SK-N-SH (cell line): ENCODE measurements at regions of chr19 and their contacts with region 1.

Region 1: DNA sequence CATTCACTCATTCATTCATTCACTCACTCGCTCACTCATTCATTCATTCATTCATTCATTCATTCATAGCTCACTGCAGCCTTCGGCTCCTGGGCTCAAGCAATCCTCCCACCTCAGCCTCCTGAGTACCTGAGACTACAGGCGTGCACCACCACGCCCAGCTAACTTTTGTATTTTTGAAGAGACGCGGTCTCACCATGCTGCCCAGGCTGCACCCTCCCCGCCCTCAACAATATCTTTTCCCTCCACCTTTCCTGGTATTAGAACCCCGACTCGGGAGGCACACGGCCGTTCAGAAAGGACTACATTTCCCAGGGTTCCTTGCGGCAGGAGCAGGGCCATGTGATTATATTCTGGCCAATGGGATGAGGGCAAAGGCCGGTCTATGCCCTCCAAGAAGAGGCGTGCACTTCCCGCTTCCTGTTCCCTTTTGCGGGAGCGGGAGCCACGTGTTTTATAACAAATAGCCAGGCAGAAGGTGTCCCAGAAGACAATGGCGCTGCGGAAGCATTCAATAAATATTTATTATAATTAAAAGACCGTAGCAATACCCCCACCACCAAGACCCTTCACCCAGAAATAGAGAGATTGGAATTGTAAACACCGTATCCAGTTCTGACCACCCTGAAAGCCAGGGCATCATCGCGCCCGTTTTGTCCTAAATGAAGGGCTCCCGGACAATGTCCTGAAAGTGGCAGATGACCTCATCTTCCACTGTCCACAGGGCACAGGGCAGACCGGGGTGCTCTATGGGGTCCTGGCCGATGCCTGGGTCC is 15.9 kb downstream of the TICAM1 start:
- DNase-seq: peak; percentile 97
- H3K4me3 ChIP-seq: peak overlapping the region in 1 of 2 experiments; percentile 27; a peak in 1 of 4 replicates
- H3K27ac ChIP-seq: peak overlapping the region; percentile 48 to 56; a peak in 3 of 4 replicates
- H3K4me1 ChIP-seq: peaks cover 3 to 7% of the 10 kb centered on the region in 2 experiments; a peak in 2 of 4 replicates
- H3K27me3 ChIP-seq: no peaks in the 10 kb centered on the region
- CTCF ChIP-seq: no peak
- EP300 ChIP-seq: no peak
- RAD21 ChIP-seq: no peak

Region 2: DNA sequence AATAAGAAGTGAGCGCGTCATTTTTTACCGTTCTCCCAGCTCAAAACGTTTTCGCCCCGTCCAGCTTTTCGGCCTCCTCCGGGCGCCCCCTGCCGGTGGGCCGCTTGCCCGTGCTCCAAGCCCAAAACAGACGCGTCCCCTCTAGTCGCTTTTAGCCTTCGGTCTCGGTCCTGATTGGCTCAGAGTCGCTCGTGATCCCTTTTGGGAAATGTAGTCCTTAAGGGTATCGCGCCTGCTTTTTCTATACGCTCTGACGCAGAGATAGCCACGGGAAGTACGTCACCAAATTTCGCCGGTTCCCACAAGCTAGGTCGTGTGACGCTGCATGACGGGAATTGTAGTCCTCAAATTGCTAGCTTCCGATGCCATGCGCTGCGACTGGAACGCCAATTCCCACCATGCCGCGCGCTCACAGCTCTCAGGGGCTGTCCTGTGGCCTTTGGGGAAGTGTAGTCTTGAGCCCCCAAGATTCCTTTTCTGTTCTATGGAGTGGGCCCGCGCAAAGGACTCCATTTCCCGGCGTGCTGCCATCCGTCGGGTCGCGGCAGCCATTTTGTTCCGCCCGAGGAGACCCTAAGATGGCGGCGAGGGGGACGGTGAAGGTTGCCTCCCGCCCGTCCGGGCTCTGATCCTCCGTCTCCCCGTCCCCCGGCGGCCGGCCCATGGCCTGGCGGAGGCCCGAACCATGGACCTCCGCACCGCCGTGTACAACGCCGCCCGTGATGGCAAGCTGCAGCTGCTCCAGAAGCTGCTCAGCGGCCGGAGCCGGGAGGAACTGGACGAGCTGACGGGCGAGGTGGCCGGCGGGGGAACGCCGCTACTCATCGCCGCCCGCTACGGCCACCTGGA is 24.2 kb before region 1 on chr19 and contains the start of gene FEM1A:
- CTCF ChIA-PET with region 1: interaction called, 18 read pairs
- POLR2A ChIA-PET with region 1: no interaction called
- DNase-seq: peak; percentile 93
- H3K4me3 ChIP-seq: peak within 1 kb of the TSS; percentile 77 to 87
- H3K27ac ChIP-seq: peak within 1 kb of the TSS; percentile 68 to 82
- H3K4me1 ChIP-seq: peaks cover 7 to 8% of the 10 kb centered on the region in 2 experiments; a peak in 2 of 4 replicates
- H3K27me3 ChIP-seq: no peaks in the 10 kb centered on the region
- CTCF ChIP-seq: peak; percentile 99
- EP300 ChIP-seq: no peak
- RAD21 ChIP-seq: peak; percentile 97
- polyA plus RNA-seq, gene FEM1A: 4.8 and 5.0 TPM in 2 replicates

Region 3: DNA sequence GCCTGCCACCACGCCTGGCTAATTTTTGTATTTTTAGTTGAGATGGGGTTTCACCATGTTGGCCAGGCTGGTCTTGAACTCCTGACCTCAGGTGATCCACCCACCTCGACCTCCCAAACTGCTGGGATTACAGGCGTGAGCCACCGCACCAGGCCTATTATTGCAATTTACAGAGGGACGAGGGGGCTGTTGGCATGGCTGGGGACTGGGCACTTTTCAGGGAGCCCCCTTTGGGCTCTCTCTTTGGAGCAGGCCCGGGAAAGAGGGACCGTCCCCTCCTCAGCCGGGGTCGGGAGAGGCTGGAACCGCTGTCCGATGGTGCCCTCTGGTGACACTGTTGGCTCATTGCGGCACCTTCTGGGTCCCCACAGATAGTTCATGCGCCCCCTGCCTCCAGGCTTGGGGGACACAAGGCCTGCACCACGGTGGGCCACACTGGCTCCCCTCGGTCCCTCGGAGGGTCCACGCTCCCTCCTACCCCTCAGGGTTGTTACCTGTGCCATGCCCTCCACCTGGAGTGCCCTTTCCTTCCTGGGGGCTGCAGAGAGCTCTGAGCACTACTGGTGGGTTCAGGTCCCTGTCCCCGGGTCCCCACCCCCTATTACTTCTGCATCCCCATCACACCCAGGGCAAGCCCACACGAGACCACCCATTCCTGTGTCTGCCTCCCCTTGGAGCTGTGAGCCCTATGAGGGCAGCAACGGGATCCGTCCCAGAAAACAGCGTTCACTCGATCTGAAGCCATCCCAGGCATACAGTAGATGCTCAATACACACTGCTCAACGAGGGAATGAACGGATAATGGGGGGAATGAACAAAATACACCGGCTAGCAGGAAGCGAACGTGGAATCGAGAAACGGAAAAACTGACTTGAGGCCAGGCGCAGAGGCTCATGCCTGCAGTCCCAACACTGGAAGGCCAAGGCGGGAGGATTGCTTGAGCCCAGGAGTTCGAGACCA is 11.6 kb before region 1 on chr19:
- CTCF ChIA-PET with region 1: interaction called, 18 read pairs
- POLR2A ChIA-PET with region 1: no interaction called
- DNase-seq: peak; percentile 90
- H3K4me3 ChIP-seq: peak overlapping the region in 1 of 2 experiments; percentile 23; a peak in 1 of 4 replicates
- H3K27ac ChIP-seq: no peak overlapping the region
- H3K4me1 ChIP-seq: no peaks in the 10 kb centered on the region
- H3K27me3 ChIP-seq: no peaks in the 10 kb centered on the region
- CTCF ChIP-seq: peak; percentile 77
- EP300 ChIP-seq: no peak
- RAD21 ChIP-seq: peak; percentile 82

Region 4: DNA sequence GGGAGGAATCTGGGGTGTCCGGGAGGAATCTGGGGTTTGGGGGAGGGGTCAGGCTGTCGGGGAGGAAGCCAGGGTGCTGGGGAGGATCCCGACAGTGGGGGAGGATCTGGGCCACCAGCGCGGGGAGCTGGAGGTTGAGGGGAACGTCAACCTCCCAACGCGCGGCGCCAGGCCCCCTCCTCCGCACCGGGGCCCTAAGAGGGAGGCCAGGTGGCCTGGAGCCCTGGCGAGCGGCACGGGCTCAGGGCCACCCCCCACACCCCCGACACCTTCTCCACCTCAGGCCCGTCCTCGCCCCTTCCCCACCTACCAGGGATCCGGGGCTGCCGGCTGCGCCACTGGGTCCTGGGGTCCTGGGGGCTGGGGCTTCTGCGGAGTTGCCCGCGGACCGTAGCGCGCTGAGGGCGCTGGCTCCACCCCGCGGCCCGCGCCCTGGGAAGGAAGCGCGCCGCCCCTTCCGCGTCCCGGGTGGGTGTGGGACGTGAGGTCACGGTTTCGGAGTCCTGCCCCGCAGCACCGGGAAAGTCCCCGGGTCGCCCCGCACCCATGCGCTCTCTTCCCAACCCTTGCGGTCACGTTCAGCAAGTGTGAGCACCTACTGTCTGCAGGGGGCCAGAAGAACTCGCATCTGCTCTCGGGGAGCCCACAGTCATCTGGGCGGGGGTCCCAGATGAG is 15.8 kb after region 1 on chr19 and contains the start of gene TICAM1:
- CTCF ChIA-PET with region 1: interaction called, 44 read pairs
- POLR2A ChIA-PET with region 1: interaction called, 4 read pairs
- DNase-seq: peak; percentile 88
- H3K4me3 ChIP-seq: peak within 1 kb of the TSS; percentile 67 to 91
- H3K27ac ChIP-seq: peak within 1 kb of the TSS; percentile 43 to 45; a peak in 3 of 4 replicates
- H3K4me1 ChIP-seq: peaks cover 5% of the 10 kb centered on the region in 2 experiments; a peak in 1 of 4 replicates
- H3K27me3 ChIP-seq: no peaks in the 10 kb centered on the region
- CTCF ChIP-seq: no peak; the same call in 1 of the 2 replicates
- EP300 ChIP-seq: no peak
- RAD21 ChIP-seq: no peak
- polyA plus RNA-seq, gene TICAM1: 1.8 and 2.7 TPM in 2 replicates

Region 5: DNA sequence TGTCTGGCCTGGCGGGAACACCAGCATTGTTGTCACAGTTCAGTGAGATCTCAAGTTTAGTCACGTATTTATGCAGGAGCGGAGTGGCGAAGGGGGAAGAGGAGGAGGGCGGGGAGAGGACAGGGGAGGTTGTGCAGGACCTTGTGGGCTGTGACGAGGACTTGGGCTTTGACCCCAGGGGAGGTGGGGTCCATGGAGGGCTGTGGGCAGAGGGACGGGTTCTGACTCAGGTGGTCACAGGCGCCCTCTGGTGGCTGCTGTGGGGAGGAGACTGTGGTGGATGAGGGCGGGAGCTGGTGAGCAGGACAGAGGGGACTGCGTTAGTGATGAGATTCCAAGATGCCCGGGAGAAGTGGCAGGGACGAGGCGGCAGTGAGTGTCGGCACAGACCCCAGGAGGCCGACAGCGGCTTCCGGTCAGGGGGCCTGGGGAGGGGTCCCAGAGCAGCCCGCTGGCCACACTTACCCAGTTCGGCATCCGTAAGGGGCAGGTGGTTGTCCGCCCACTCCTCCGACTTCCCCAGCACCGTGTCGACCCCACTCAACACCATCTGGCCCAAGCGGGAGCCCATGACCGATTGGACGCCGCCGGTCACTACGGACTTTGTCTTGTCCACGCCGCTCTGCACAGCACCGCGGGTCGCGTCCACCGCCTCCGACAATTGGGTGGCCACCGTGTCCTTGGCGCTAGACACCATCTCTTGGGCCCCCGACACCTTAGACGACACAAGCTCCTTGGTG is 36.1 kb after region 1 on chr19:
- CTCF ChIA-PET with region 1: interaction called, 409 read pairs
- POLR2A ChIA-PET with region 1: no interaction called
- DNase-seq: peak; percentile 94
- H3K4me3 ChIP-seq: peak overlapping the region in 1 of 2 experiments; percentile 41; a peak in 1 of 4 replicates
- H3K27ac ChIP-seq: no peak overlapping the region
- H3K4me1 ChIP-seq: no peaks in the 10 kb centered on the region
- H3K27me3 ChIP-seq: no peaks in the 10 kb centered on the region
- CTCF ChIP-seq: peak; percentile 91
- EP300 ChIP-seq: no peak
- RAD21 ChIP-seq: peak; percentile 76

Region 6: GRCh38 chr19:4909897-4910593 is 94.4 kb after region 1 on chr19:
- CTCF ChIA-PET with region 1: interaction called, 60 read pairs
- POLR2A ChIA-PET with region 1: no interaction called
- DNase-seq: peak; percentile 99
- H3K4me3 ChIP-seq: peak overlapping the region; percentile 62 to 82
- H3K27ac ChIP-seq: peak overlapping the region; percentile 81 to 84
- H3K4me1 ChIP-seq: peaks cover 27 to 31% of the 10 kb centered on the region in 2 experiments; a peak in 3 of 4 replicates
- H3K27me3 ChIP-seq: no peaks in the 10 kb centered on the region
- CTCF ChIP-seq: no peak
- EP300 ChIP-seq: no peak
- RAD21 ChIP-seq: no peak

Region 7: DNA sequence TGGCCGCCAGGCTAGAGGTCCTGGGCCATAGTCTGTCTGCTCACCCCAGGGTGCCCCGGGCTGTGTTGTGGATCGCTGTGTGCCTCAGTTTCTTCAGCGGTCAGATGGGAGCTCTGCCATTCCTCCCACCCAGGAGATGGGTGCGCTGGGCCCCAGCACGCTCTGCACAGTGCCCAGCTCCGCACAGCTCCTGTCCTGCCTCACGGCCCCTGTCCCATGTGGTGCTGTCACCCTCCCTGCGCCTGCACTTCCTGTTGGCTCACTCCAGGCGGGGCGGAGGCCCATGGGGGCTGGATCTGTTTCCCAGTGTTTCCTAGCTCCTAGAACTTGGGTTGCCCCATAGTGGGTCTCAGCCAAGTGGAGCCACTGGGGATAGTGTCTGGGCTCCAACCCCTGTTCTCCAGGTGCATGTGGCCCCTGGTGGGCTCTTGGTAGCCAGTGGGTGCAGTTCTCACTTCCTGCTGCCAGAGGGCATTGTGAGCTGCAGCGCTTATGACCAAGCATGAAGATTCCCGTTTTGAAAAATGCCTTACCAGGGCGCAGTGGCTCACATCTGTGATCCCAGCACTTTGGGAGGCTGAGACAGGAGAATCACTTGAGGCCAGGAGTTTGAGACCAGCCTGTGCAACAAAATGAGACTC is 223.1 kb after region 1 on chr19:
- CTCF ChIA-PET with region 1: interaction called, 24 read pairs
- POLR2A ChIA-PET with region 1: no interaction called
- DNase-seq: peak; percentile 72
- H3K4me3 ChIP-seq: no peak overlapping the region
- H3K27ac ChIP-seq: peak overlapping the region in 1 of 2 experiments; percentile 90; a peak in 2 of 4 replicates
- H3K4me1 ChIP-seq: peaks cover 23 to 42% of the 10 kb centered on the region in 2 experiments
- H3K27me3 ChIP-seq: no peaks in the 10 kb centered on the region
- CTCF ChIP-seq: peak; percentile 56
- EP300 ChIP-seq: no peak
- RAD21 ChIP-seq: peak; percentile 15; the same call in 1 of the 2 replicates

Region 8: GRCh38 chr19:5225486-5226345 is 410.1 kb after region 1 on chr19:
- CTCF ChIA-PET with region 1: no interaction called
- POLR2A ChIA-PET with region 1: no interaction called
- DNase-seq: peak; percentile 62
- H3K4me3 ChIP-seq: no peak overlapping the region
- H3K27ac ChIP-seq: no peak overlapping the region
- H3K4me1 ChIP-seq: no peaks in the 10 kb centered on the region
- H3K27me3 ChIP-seq: no peaks in the 10 kb centered on the region
- CTCF ChIP-seq: peak; percentile 57
- EP300 ChIP-seq: no peak
- RAD21 ChIP-seq: peak; percentile 37; the same call in 1 of the 2 replicates